Activated naive CD4-positive, alpha-beta T cell treated with anti-CD3 and anti-CD28 coated beads for 36 hours (primary cell): ENCODE measurements at regions of chr16 and their contacts with region 1.

Region 1: GRCh38 chr16:2251483-2252240 is at the start of gene ECI1:
- DNase-seq: peak; percentile 89
- H3K4me3 Mint-ChIP-seq: peak within 1 kb of the TSS; percentile 87
- H3K27ac Mint-ChIP-seq: peak within 1 kb of the TSS; percentile 87
- H3K4me1 Mint-ChIP-seq: peaks cover 13% of the 10 kb centered on the region
- H3K27me3 Mint-ChIP-seq: no peaks in the 10 kb centered on the region
- total RNA-seq, gene ECI1: 39.7 to 48.3 TPM

Region 2: GRCh38 chr16:2023098-2023925 is 228.3 kb before region 1 on chr16:
- CTCF ChIA-PET with region 1: interaction called, 3 read pairs
- intact Hi-C with region 1: loop called (anchors 2 kb)
- DNase-seq: peak; percentile 97
- H3K4me3 Mint-ChIP-seq: peak overlapping the region; percentile 49
- H3K27ac Mint-ChIP-seq: no peak overlapping the region
- H3K4me1 Mint-ChIP-seq: peaks cover 22% of the 10 kb centered on the region
- H3K27me3 Mint-ChIP-seq: peaks cover 29% of the 10 kb centered on the region

Region 3: GRCh38 chr16:2194852-2195321 is 56.8 kb before region 1 on chr16:
- CTCF ChIA-PET with region 1: interaction called, 9 read pairs
- intact Hi-C with region 1: loop called (anchors 1 kb)
- DNase-seq: peak; percentile 71
- H3K4me3 Mint-ChIP-seq: no peak overlapping the region
- H3K27ac Mint-ChIP-seq: no peak overlapping the region
- H3K4me1 Mint-ChIP-seq: peaks cover 4% of the 10 kb centered on the region
- H3K27me3 Mint-ChIP-seq: peaks cover 26% of the 10 kb centered on the region

Region 4: GRCh38 chr16:2205104-2205966 is 46.3 kb before region 1 on chr16 and contains the start of gene MLST8:
- CTCF ChIA-PET with region 1: no interaction called
- intact Hi-C with region 1: loop called (anchors 1 kb)
- DNase-seq: peak; percentile 86
- H3K4me3 Mint-ChIP-seq: peak within 1 kb of the TSS; percentile 78
- H3K27ac Mint-ChIP-seq: peak within 1 kb of the TSS; percentile 85
- H3K4me1 Mint-ChIP-seq: peaks cover 22% of the 10 kb centered on the region
- H3K27me3 Mint-ChIP-seq: no peaks in the 10 kb centered on the region
- total RNA-seq, gene MLST8: 70.0 to 70.1 TPM

Region 5: GRCh38 chr16:2213817-2214720 is 37.6 kb before region 1 on chr16:
- CTCF ChIA-PET with region 1: interaction called, 3 read pairs
- intact Hi-C with region 1: loop called (anchors 2 kb)
- DNase-seq: no peak
- H3K4me3 Mint-ChIP-seq: peak overlapping the region; percentile 73
- H3K27ac Mint-ChIP-seq: no peak overlapping the region
- H3K4me1 Mint-ChIP-seq: peaks cover 22% of the 10 kb centered on the region
- H3K27me3 Mint-ChIP-seq: no peaks in the 10 kb centered on the region

Region 6: DNA sequence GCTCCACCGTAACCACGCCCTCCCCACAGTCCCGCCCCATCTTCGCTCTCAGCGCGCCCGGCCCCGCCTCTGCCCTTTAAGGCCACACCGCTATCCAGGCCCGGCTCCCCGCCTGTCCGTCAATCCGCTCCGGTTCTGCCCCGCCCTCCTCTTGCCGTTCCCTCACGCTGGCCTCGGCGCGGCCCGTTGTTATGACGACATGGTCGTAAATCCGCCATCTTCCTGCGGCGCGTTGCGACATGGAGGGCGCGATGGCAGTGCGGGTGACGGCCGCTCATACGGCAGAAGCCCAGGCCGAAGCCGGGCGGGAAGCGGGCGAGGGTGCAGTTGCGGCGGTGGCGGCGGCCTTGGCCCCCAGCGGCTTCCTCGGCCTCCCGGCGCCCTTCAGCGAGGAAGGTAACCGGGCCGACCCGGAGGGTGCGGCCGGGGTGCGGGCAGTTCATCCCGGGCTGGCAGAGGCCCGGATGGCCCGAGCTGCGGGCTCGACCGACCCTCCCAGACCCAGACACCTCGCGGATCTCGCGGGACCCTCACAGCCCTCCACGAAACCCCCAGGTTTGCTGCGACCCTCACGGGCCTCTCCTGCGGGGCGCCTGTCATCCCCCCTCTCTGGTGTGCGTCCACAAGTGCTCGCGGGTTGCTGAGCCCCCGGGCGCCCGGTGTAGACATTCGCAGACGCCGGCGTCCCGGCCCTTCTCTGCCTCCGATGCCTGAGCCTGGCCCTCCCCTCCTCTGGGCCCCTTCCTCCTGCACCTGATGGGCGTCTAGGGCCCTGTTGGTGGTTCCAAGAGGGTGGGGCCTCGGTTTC is 28.1 kb before region 1 on chr16 and contains the start of gene E4F1:
- CTCF ChIA-PET with region 1: interaction called, 3 read pairs
- intact Hi-C with region 1: loop called (anchors 1 kb)
- DNase-seq: peak; percentile 100
- H3K4me3 Mint-ChIP-seq: peak within 1 kb of the TSS; percentile 78
- H3K27ac Mint-ChIP-seq: peak within 1 kb of the TSS; percentile 18
- H3K4me1 Mint-ChIP-seq: peaks cover 22% of the 10 kb centered on the region
- H3K27me3 Mint-ChIP-seq: no peaks in the 10 kb centered on the region
- total RNA-seq, gene E4F1: 21.2 to 21.7 TPM

Region 7: DNA sequence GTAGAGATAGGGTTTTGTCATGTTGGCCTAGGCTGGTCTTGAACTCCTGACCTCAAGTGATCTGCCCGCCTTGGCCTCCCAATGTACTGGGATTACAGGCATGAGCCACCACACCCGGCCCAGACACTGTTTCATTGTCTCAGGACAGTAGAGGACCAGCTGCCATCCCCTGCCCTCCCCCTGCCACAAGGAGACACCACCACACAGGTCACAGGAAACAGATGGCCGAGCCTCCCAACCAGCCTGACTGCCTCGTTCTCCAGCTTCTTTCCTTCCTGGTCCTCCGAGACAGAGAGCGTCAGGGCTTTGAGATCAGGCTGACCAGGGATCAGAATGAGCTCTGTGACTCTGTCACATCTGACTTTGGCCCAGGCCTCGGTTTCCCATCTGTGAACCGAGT is 37.1 kb after region 1 on chr16:
- CTCF ChIA-PET with region 1: no interaction called
- intact Hi-C with region 1: no loop called
- DNase-seq: no peak
- H3K4me3 Mint-ChIP-seq: no peak overlapping the region
- H3K27ac Mint-ChIP-seq: no peak overlapping the region
- H3K4me1 Mint-ChIP-seq: no peaks in the 10 kb centered on the region
- H3K27me3 Mint-ChIP-seq: no peaks in the 10 kb centered on the region

Region 8: DNA sequence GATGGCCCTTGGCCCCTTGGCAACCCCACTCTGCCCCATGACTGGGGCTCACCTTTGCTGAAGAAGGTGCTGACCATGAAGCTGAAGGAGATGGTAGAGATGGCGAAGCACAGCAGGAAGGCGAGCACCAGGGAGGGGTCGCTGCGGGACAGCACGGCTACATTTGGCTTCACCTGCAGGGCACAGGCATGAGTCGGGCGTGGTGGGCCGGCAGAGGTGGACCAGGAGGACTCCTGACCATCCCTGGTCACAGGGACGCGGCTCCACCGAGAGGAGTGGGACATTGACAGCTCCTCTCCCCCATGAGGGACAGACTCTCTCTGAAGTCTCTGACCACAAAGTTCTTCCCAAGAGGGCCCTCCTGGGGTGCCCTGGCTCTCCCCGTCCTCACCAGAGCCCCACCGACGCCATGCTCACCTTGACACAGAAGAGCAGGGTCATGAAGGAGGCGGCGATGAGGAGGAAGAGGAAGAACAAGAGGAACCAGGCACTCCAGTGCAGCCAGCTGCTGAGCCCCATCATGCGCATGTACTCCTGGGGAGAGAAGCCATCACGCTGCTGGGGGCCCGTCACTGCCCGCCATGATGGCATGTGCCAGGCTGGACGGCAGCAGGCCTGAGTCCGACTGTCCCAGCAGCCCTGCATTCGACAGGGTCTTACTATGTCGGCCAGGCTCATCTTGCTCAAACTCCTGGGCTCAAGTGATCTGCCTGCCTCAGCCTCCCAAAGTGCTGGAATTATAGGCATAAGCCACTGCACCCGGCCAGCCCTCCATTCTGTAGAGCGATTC is 65.8 kb after region 1 on chr16:
- CTCF ChIA-PET with region 1: no interaction called
- intact Hi-C with region 1: no loop called
- DNase-seq: no peak
- H3K4me3 Mint-ChIP-seq: no peak overlapping the region
- H3K27ac Mint-ChIP-seq: no peak overlapping the region
- H3K4me1 Mint-ChIP-seq: no peaks in the 10 kb centered on the region
- H3K27me3 Mint-ChIP-seq: no peaks in the 10 kb centered on the region

Region 9: GRCh38 chr16:2486645-2487516 is 235.2 kb after region 1 on chr16:
- CTCF ChIA-PET with region 1: no interaction called
- intact Hi-C with region 1: loop called (anchors 5 kb)
- DNase-seq: peak; percentile 94
- H3K4me3 Mint-ChIP-seq: peak overlapping the region; percentile 10
- H3K27ac Mint-ChIP-seq: peak overlapping the region; percentile 69
- H3K4me1 Mint-ChIP-seq: peaks cover 16% of the 10 kb centered on the region
- H3K27me3 Mint-ChIP-seq: no peaks in the 10 kb centered on the region

Region 10: GRCh38 chr16:2595393-2596205 is 343.9 kb after region 1 on chr16:
- CTCF ChIA-PET with region 1: no interaction called
- intact Hi-C with region 1: no loop called
- DNase-seq: no peak
- H3K4me3 Mint-ChIP-seq: no peak overlapping the region
- H3K27ac Mint-ChIP-seq: no peak overlapping the region
- H3K4me1 Mint-ChIP-seq: peaks cover 20% of the 10 kb centered on the region
- H3K27me3 Mint-ChIP-seq: no peaks in the 10 kb centered on the region

Region 11: GRCh38 chr16:2777231-2777902 is 525.7 kb after region 1 on chr16 and contains the start of gene ELOB:
- CTCF ChIA-PET with region 1: no interaction called
- intact Hi-C with region 1: no loop called
- DNase-seq: peak; percentile 91
- H3K4me3 Mint-ChIP-seq: peak within 1 kb of the TSS; percentile 94
- H3K27ac Mint-ChIP-seq: peak within 1 kb of the TSS; percentile 96
- H3K4me1 Mint-ChIP-seq: peaks cover 31% of the 10 kb centered on the region
- H3K27me3 Mint-ChIP-seq: no peaks in the 10 kb centered on the region
- total RNA-seq, gene ELOB: 177 to 189 TPM